Heart right ventricle (tissue), 16 donors: ENCODE measurements at regions of chr20 and their contacts with region 1.

Region 1: DNA sequence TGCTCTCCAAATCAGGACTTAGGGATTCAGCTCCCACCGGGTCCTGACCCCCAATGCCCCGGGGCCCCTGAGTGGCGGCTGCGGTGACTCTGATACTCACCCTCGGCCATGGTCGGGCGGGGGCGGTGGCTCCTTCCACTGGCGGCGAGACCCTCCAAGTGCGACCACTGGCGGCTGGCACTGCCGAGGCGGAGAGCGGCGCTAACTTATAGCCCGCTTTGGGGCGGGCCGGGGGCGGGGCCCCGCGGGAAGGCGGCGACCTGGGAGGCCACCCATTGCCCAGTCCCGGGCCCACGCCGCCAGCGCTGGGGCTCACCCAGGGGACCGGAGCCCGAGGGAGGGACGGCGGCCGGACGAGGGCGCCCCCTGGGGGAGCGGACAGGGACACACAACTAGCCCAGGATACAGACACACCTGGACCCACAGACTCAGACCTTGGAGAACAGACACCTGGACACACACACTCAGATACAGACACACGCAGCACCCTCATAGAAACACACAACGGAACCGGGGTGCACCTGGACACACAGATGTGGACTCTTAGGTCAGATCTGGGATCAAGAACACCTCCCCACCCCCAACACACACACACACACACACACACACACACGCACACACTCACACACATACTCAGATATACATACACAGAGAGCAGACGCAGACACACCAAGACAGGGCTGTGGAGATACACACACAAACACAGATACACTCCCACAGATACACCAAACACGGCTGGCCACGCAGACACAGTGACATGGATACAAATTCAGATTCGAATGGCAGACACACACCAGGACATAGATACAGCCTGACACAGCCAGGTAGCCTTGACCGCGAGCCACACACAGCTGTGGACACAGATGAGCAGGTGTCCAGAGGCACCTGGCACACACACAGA is at the start of gene TGM2:
- DNase-seq: peak; percentile 83 to 88
- ATAC-seq: peak; percentile 83 to 93 (median 92)
- H3K4me3 ChIP-seq: peak within 1 kb of the TSS; percentile 47 to 80 (median 68)
- H3K27ac ChIP-seq: peak within 1 kb of the TSS; percentile 71 to 96 (median 90)
- H3K4me1 ChIP-seq: peaks cover 24 to 81% (median 51%) of the 10 kb centered on the region in 9 donors
- H3K27me3 ChIP-seq: no peaks in the 10 kb centered on the region
- CTCF ChIP-seq: peak; percentile 84 to 94 (median 89)
- total RNA-seq, gene TGM2: 279 to 993 (median 472) TPM

Region 2: GRCh38 chr20:37564388-37565133 is 600.8 kb before region 1 on chr20:
- intact Hi-C with region 1: loop called in 1 of 10 experiments (anchors 5 kb)
- DNase-seq: peak; percentile 16 to 49
- ATAC-seq: peak in 7 of 8 donors; percentile 50 to 81 (median 72)
- H3K4me3 ChIP-seq: no peak overlapping the region
- H3K27ac ChIP-seq: no peak overlapping the region
- H3K4me1 ChIP-seq: peaks cover 0 to 7% (median 5%) of the 10 kb centered on the region in 9 donors
- H3K27me3 ChIP-seq: peaks cover 0 to 83% (median 61%) of the 10 kb centered on the region in 7 donors
- CTCF ChIP-seq: peak; percentile 83 to 95 (median 91)

Region 3: GRCh38 chr20:38057351-38057972 is 107.9 kb before region 1 on chr20:
- intact Hi-C with region 1: loop called (anchors 1 to 5 kb)
- DNase-seq: peak; percentile 83 to 86
- ATAC-seq: peak; percentile 87 to 95 (median 92)
- H3K4me3 ChIP-seq: no peak overlapping the region
- H3K27ac ChIP-seq: peak overlapping the region in 3 of 10 donors; percentile 10 to 60 (median 42)
- H3K4me1 ChIP-seq: peaks cover 0 to 39% (median 13%) of the 10 kb centered on the region in 9 donors
- H3K27me3 ChIP-seq: no peaks in the 10 kb centered on the region
- CTCF ChIP-seq: peak; percentile 82 to 98 (median 91)

Region 4: DNA sequence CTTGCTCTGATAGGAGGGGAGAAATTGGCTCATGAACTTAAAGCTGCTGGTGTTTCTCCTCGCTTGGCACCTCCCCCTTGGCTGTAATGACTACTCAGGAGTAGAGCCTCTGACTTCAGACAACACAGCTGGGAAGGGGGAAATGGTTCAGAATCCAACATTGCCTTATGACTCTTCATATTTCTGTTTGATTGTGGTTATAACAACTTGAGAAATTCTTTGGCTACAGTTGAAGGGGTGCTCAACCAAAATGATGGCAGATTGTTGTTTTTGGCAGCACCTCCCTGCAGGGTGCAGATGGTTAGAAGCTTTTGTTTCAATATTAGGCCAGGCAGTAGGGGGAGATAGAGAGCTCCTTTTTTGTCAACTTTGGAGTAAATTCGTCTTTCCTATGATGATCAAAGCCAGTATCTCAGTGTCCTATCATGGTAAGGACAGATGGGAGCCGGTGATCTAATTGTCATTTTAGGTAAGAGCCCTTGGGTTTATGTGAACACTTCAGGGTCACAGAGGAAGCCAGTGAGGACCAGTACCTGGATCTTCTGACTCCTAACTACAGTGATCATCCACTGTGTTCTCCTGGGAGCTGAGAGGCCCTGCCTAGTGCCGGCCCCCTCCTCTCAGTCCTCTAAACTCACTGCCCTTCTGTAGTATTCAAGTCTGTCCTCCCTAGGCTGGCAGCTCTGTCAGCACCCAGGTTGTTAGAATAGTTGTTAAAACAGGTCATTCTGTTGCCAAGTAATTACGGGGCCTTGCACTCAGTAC is 91.8 kb before region 1 on chr20:
- intact Hi-C with region 1: loop called in 7 of 10 experiments (anchors 1 to 5 kb)
- DNase-seq: peak; percentile 30 to 85
- ATAC-seq: peak; percentile 72 to 88 (median 82)
- H3K4me3 ChIP-seq: peak overlapping the region in 1 of 10 donors; percentile 3
- H3K27ac ChIP-seq: peak overlapping the region; percentile 57 to 91 (median 82)
- H3K4me1 ChIP-seq: peaks cover 8 to 61% (median 41%) of the 10 kb centered on the region in 9 donors
- H3K27me3 ChIP-seq: no peaks in the 10 kb centered on the region
- CTCF ChIP-seq: peak; percentile 72 to 91 (median 79)

Region 5: DNA sequence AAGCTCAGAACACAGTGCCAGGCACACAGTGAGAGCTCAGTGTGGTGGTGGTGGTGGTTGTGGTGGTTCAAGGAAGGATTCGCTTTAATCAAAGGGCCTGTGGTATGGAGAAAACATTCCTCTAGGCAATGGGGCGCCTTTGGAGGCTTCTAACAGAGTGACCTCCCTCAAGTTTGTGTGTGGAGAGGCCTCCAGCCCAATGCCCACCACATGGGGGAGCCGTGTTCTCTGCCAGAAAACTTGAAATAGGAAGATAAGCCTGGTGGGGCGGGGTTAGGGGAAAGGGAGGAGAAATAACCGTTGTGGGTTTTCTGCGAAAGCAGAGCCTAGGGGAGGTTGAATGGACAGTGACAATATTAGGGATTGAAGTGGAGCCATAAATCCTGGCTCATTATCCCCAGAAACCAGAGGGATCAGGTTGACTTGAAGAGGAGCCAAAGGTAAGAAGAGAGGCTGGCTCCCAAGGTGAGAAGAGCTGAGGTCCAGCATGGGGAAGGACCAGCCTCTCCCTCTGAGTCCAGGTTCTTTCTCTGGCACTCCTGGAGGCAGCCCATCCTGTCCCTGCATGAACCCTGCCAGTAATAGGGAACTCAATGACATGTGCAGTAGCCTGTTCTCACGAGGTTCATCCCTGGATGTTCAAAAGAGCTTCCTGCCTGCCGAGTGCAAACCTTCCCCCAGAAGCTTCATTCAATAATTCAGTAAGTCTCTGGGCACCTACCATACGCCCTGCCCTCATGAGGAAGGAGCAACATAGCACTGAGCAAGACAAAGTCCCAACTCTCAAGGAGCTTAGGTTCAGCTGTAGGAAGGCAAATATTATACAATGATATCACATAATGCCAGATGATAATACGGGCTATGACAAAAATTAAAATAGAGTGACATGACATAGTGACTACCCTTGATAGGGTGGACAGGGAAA is 51.7 kb before region 1 on chr20:
- intact Hi-C with region 1: loop called in 4 of 10 experiments (anchors 2 to 5 kb)
- DNase-seq: peak in 1 of 2 donors; percentile 41
- ATAC-seq: no peak
- H3K4me3 ChIP-seq: no peak overlapping the region
- H3K27ac ChIP-seq: peak overlapping the region in 7 of 10 donors; percentile 6 to 60 (median 38)
- H3K4me1 ChIP-seq: peaks cover 26 to 58% (median 45%) of the 10 kb centered on the region in 9 donors
- H3K27me3 ChIP-seq: no peaks in the 10 kb centered on the region
- CTCF ChIP-seq: peak in 7 of 9 donors; percentile 7 to 51 (median 38)

Region 6: DNA sequence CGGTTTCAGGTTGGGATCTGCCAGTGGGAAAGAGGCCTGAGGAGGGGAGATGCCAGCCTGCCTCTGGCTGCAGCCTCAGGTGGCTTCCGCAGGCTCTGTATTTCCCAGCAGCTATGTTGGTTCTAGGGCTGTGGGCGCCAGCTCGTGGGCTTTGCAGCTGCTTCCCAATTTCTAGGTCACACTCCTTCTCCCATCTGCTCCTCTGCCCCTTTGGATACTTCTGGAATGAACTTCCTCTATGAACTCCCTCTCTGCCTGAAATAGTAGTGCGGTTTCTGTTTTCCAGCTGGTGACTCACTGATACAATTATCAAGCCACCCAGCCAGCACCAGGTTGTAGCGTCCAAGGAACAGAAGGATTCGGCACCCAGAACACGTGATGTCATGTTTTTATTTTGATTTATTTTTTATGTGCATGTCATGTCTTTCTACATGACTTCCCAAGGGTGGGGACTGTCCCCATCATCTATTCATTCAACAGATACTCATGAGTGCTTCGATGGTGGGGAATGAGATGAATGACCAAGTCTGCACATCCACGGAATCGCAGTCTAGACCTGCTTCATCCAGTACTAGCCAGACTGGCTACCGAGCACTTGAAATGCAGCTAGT is 38.2 kb before region 1 on chr20:
- intact Hi-C with region 1: loop called in 2 of 10 experiments (anchors 5 kb)
- DNase-seq: peak in 1 of 2 donors; percentile 72
- ATAC-seq: peak; percentile 66 to 87 (median 78)
- H3K4me3 ChIP-seq: no peak overlapping the region
- H3K27ac ChIP-seq: peak overlapping the region; percentile 67 to 91 (median 82)
- H3K4me1 ChIP-seq: peaks cover 19 to 54% (median 42%) of the 10 kb centered on the region in 9 donors
- H3K27me3 ChIP-seq: no peaks in the 10 kb centered on the region
- CTCF ChIP-seq: peak in 2 of 9 donors; percentile 11 to 18